ENCODE measurements at regions of chr17 and their contacts with region 1.

Region 1: DNA sequence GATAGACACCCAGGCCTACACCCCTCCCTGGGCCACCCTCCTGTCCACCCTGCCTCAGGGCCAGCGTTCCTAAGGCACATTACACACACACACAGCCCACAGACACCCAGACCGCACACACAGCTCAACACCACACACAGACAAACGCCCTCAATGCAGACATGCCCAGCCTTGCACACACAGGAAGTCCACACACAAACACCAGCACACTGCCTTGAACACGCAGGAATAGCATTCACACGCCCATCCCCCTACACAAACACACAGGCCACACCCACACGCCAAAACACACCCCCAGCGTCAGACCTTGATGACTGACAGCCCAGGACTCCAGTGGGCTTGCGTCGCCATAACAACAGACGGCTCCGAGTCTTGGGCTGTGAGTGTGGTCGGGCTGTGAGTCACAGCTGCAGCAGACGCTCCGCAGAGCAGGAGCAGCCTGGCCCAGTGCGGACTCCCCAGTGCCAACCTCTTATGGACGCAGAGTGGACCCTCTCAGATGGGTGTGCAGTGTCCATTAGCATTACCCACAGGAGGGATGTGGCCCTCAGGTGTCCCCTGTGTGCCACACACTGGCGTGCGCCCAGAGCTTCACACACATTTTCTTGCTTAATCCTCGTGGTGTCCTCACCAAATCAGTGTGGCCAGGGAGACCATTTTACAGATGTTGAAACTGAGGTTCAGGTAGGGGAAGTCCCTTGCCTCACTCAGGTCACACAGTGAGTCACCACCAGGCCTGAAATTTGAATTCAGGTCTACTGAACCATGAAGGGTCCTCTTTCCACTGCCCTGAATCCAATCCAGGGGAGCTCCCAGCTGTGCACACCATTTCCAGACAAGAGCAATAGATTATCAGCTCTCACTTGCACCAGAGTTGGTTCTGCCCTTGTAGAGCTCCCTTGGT is 17.8 kb upstream of the RAI1 start:
- DNase-seq: peak; percentile 60 to 66
- H3K4me3 ChIP-seq: no peak overlapping the region
- H3K27ac ChIP-seq: no peak overlapping the region
- H3K4me1 ChIP-seq: peaks cover 0 to 8% (median 6%) of the 10 kb centered on the region in 4 experiments; a peak in 6 of 7 replicates
- H3K27me3 ChIP-seq: no peaks in the 10 kb centered on the region; a peak in 1 of 7 replicates
- CTCF ChIP-seq: no peak
- EP300 ChIP-seq: no peak
- POLR2A ChIP-seq: no peak
- RAD21 ChIP-seq: no peak

Region 2: GRCh38 chr17:17653343-17653742 is 10.1 kb before region 1 on chr17:
- CTCF ChIA-PET with region 1: interaction called, 15 read pairs
- POLR2A ChIA-PET with region 1: no interaction called
- DNase-seq: no peak
- H3K4me3 ChIP-seq: no peak overlapping the region
- H3K27ac ChIP-seq: no peak overlapping the region
- H3K4me1 ChIP-seq: no peaks in the 10 kb centered on the region
- H3K27me3 ChIP-seq: no peaks in the 10 kb centered on the region; a peak in 1 of 7 replicates
- CTCF ChIP-seq: no peak
- EP300 ChIP-seq: no peak
- POLR2A ChIP-seq: no peak
- RAD21 ChIP-seq: no peak

Measured in H1 (cell line).